ENCODE measurements at regions of chr3 and their contacts with region 1.

Region 1: GRCh38 chr3:189270248-189270832 is 98.6 kb downstream of the TPRG1 start:
- DNase-seq: peak; percentile 88
- H3K4me3 Mint-ChIP-seq: no peak overlapping the region
- H3K27ac Mint-ChIP-seq: peak overlapping the region; percentile 87
- H3K4me1 Mint-ChIP-seq: peaks cover 56% of the 10 kb centered on the region
- H3K27me3 Mint-ChIP-seq: no peaks in the 10 kb centered on the region
- CTCF ChIP-seq: peak; percentile 85

Region 2: DNA sequence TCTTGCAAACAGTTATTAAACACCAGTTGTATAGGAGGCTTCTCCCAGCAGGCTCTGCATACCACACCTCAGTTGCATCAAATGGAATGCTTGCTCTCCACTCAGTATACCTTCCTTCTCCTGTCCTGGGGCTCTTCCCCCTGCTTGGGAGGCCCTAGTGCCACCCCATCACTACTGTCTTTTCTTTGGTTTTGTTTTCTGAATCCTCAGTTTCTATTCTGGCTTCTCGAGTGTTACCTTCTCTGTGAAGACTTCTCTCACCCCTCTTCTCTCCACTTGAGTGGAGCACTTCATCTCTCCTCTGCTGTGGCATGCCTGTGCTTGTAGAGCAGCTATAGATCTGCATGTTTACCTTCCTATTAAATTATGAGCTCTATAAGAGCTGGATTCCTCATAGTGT is 174.2 kb before region 1 on chr3:
- CTCF ChIA-PET with region 1: no interaction called
- POLR2A ChIA-PET with region 1: no interaction called
- intact Hi-C with region 1: no loop called
- DNase-seq: no peak
- H3K4me3 Mint-ChIP-seq: no peak overlapping the region
- H3K27ac Mint-ChIP-seq: no peak overlapping the region
- H3K4me1 Mint-ChIP-seq: peaks cover 5% of the 10 kb centered on the region
- H3K27me3 Mint-ChIP-seq: no peaks in the 10 kb centered on the region
- CTCF ChIP-seq: no peak

Region 3: GRCh38 chr3:189233225-189233858 is 37.0 kb before region 1 on chr3:
- CTCF ChIA-PET with region 1: interaction called, 4 read pairs
- POLR2A ChIA-PET with region 1: no interaction called
- intact Hi-C with region 1: loop called (anchors 1 kb)
- DNase-seq: peak; percentile 78
- H3K4me3 Mint-ChIP-seq: no peak overlapping the region
- H3K27ac Mint-ChIP-seq: no peak overlapping the region
- H3K4me1 Mint-ChIP-seq: no peaks in the 10 kb centered on the region
- H3K27me3 Mint-ChIP-seq: no peaks in the 10 kb centered on the region
- CTCF ChIP-seq: peak; percentile 67

Region 4: GRCh38 chr3:189249987-189250386 is 20.4 kb before region 1 on chr3:
- CTCF ChIA-PET with region 1: no interaction called
- POLR2A ChIA-PET with region 1: no interaction called
- intact Hi-C with region 1: no loop called
- DNase-seq: no peak
- H3K4me3 Mint-ChIP-seq: no peak overlapping the region
- H3K27ac Mint-ChIP-seq: no peak overlapping the region
- H3K4me1 Mint-ChIP-seq: no peaks in the 10 kb centered on the region
- H3K27me3 Mint-ChIP-seq: no peaks in the 10 kb centered on the region
- CTCF ChIP-seq: no peak

Region 5: DNA sequence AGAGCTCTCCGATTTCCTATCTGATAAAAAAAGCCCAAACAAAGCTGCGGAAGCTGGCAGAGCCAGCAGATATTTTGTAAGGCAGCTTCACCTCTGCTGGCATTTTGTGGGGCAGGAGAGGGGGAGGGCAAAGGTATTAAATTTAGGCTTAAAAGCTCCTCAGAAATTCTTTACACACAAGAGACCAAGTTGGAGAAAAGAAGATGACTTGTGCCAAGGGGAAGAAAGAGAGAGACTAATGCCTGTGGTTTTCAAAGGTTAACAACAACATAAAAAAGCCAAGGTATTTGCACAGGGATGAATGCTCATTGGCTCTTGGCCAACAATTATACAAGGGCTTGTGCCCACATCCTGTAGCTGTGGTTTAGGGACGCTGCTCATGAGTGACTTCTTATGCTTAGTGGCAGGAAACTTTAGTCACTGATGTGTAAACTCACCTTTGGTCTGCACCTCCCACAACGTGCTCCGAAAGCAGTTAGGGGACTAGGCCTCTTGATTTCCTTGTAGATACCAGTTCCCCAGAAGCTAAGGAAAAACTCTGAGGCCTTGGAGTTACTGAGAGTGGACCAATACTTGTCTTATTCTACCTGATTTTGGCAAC is 54.3 kb after region 1 on chr3:
- CTCF ChIA-PET with region 1: interaction called, 4 read pairs
- POLR2A ChIA-PET with region 1: interaction called, 11 read pairs
- intact Hi-C with region 1: no loop called
- DNase-seq: peak; percentile 98
- H3K4me3 Mint-ChIP-seq: no peak overlapping the region
- H3K27ac Mint-ChIP-seq: peak overlapping the region; percentile 69
- H3K4me1 Mint-ChIP-seq: peaks cover 30% of the 10 kb centered on the region
- H3K27me3 Mint-ChIP-seq: no peaks in the 10 kb centered on the region
- CTCF ChIP-seq: no peak

Region 6: GRCh38 chr3:189488241-189488767 is 218.0 kb after region 1 on chr3:
- CTCF ChIA-PET with region 1: interaction called, 5 read pairs
- POLR2A ChIA-PET with region 1: interaction called, 15 read pairs
- intact Hi-C with region 1: loop called (anchors 1 kb)
- DNase-seq: peak; percentile 97
- H3K4me3 Mint-ChIP-seq: peak overlapping the region; percentile 38
- H3K27ac Mint-ChIP-seq: peak overlapping the region; percentile 80
- H3K4me1 Mint-ChIP-seq: peaks cover 34% of the 10 kb centered on the region
- H3K27me3 Mint-ChIP-seq: no peaks in the 10 kb centered on the region
- CTCF ChIP-seq: no peak

Region 7: GRCh38 chr3:189710620-189711402 is 440.5 kb after region 1 on chr3:
- CTCF ChIA-PET with region 1: interaction called, 4 read pairs
- POLR2A ChIA-PET with region 1: interaction called, 9 read pairs
- intact Hi-C with region 1: loop called (anchors 1 kb)
- DNase-seq: peak; percentile 95
- H3K4me3 Mint-ChIP-seq: no peak overlapping the region
- H3K27ac Mint-ChIP-seq: peak overlapping the region; percentile 35
- H3K4me1 Mint-ChIP-seq: peaks cover 31% of the 10 kb centered on the region
- H3K27me3 Mint-ChIP-seq: no peaks in the 10 kb centered on the region
- CTCF ChIP-seq: no peak

Region 8: DNA sequence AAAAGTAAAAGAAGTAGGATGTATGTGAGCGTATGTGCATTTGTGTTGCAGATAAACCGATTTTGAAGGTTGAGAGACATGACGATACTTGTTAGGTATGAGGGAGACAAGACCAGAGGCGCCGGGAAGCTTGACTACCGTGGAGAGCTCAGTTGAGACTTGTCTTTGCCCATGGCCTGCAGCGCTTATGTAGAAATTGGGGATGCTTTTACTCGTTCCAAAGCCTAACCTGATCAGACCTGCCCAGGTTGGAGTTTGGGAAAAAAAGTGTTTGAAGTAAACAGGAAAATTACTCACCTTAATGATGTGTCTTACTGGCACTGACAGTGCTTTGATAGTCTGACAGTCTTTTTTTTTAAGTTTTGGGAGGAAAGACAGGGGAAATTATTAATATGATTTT is 563.7 kb after region 1 on chr3:
- CTCF ChIA-PET with region 1: interaction called, 5 read pairs
- POLR2A ChIA-PET with region 1: interaction called, 12 read pairs
- intact Hi-C with region 1: loop called (anchors 1 kb)
- DNase-seq: peak; percentile 99
- H3K4me3 Mint-ChIP-seq: peak overlapping the region; percentile 26
- H3K27ac Mint-ChIP-seq: peak overlapping the region; percentile 37
- H3K4me1 Mint-ChIP-seq: peaks cover 41% of the 10 kb centered on the region
- H3K27me3 Mint-ChIP-seq: no peaks in the 10 kb centered on the region
- CTCF ChIP-seq: no peak

Region 9: DNA sequence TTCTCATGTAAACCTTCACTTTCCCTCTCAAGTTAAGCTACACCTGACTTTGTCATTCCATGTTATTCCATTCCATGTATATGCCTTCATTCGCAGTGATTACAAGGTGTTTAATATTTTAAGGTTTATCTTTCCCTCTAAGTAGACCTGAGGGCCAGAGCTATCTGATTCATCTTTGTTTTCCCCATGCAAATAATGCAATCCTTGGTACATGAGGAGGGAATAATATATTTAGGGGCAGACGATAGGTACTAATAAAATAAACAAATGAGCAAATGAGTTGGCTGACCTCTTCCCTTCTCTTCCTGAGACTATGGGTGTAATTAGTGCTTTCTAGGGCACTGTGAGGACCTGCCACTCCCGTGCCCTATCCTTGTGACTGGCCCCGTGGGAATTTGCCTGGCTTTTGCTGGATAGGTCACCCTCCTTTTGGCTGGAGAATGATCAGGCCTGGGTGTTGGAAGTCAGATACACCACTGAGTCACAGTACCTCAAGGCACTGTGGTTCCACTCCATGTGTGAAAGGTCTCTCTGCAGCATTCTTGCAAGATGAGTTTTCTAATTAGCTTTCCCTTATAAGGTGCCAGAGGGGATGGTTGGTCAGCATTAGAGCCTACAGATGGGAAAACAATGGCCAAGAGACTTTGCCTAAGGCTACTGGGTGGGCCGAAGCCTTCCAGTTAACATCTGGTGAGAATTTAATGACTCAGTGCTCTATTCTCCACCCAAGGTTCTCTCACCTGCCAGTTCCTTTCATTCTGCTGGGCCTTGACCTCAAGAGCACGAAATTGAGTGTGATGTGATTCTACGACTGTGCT is 667.2 kb after region 1 on chr3:
- CTCF ChIA-PET with region 1: interaction called, 16 read pairs
- POLR2A ChIA-PET with region 1: interaction called, 18 read pairs
- intact Hi-C with region 1: loop called (anchors 1 kb)
- DNase-seq: peak; percentile 100
- H3K4me3 Mint-ChIP-seq: peak overlapping the region; percentile 33
- H3K27ac Mint-ChIP-seq: peak overlapping the region; percentile 95
- H3K4me1 Mint-ChIP-seq: peaks cover 39% of the 10 kb centered on the region
- H3K27me3 Mint-ChIP-seq: no peaks in the 10 kb centered on the region
- CTCF ChIP-seq: no peak

Measured in MCF 10A (cell line).